ENCODE measurements at regions of chr5 and their contacts with region 1.

Region 1: DNA sequence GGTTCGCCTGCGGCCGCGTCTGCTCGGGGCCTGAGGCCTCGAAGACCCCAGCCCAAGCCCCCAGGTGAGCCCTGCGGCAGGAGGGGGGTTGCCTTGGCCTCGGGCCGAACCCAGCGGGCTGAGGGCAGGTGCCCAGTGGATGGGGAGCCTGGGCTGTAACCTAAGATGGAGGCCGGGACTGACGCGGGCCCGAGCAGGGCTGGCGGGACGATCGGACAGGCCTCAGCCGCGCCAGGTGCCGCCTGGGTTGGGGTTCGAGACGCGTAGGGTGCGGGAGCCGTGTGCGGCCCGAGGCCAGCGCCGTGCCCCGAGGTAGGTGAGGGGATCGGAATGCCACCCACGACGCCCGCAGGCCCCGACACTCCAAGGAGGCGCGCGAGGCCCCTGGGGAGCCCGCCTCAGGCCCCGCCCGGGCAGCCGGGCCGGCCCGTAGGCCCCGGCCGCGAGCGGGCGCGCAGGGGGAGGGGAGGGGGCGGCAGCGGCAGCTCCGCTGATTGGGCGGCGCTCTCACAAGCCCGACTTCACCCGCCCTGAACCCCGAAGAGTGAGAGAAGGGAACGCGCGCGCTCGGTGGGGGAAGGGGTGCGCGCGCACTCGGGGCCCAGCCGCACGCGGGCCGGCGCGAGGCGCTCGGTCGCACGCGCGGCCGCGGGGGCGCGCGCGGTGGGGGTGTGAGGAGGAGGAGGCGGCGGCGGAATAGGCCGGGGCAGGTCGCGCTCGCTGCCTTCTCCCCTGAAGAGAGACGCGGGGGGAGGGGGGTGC is at the start of gene NSD1:
- DNase-seq: peak; percentile 95
- total RNA-seq, gene NSD1: 53.9 TPM

Region 2: GRCh38 chr5:176415952-176416924 is 717.0 kb before region 1 on chr5 and contains the start of gene CLTB:
- intact Hi-C with region 1: no loop called
- DNase-seq: peak; percentile 97
- total RNA-seq, gene CLTB: 252 TPM

Region 3: DNA sequence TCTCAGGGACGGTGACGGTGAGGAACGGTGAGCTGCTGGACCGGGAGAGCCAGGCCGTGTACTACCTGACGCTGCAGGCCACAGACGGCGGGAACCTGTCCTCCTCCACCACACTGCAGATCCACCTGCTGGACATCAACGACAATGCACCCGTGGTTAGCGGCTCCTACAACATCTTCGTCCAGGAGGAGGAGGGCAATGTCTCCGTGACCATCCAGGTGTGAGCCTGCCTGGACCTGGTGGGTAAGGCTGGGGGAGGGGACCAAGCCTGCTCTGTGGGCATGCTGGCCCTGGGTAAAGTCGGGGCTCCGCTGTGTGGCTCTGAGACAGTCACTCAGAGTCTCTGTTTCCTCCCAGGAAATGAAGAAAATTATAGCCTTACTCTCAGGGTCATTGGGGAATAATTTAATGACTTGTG is 554.9 kb before region 1 on chr5:
- intact Hi-C with region 1: no loop called
- DNase-seq: no peak

Region 4: GRCh38 chr5:177195307-177195952 is 62.2 kb after region 1 on chr5:
- intact Hi-C with region 1: loop called (anchors 5 kb)
- DNase-seq: no peak

Region 5: GRCh38 chr5:177249761-177250526 is 116.7 kb after region 1 on chr5:
- intact Hi-C with region 1: loop called (anchors 5 kb)
- DNase-seq: no peak

Region 6: DNA sequence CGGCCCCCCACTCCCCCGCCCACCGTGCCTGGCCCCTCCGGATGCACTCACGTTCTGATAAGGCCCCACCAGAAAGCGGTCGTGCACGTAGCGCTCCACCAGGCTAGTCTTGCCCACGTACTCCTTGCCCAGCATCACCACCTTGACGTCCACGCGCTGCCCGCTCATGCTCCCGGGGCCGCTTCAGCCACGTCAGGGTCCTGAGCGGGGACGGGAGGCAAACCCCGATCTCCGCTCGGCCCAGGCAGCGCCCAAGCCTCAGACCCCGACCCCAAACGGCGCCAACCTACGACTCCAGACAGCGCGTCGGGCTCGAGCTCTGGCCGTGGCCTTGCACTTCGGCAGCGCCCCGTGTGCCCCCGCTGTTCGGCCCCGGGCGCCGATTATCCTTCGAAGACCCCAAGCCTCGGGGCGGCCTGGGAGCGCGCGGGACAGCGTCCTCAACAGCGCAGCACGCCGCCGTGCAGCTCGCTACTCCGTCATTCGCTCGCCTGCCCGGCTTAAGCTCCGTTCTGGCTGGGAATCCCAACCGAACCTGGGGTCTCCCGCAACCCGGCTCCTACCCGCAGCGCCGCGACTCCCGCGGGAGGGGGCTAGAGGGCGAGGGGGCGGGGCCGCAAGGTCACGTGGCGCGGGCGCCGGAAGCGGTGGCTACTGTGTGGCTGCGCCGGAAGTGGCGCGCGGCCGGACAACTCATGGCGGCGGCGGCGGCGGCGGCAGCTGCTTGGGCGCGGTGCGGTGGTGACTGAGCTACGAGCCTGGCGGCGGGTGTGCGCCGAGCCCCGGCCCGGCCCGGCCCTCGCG is 170.1 kb after region 1 on chr5 and contains the starts of genes PRELID1 and RAB24:
- intact Hi-C with region 1: loop called (anchors 5 kb)
- DNase-seq: peak; percentile 95
- total RNA-seq, gene PRELID1: 49.8 TPM
- total RNA-seq, gene RAB24: 19.0 TPM

Region 7: DNA sequence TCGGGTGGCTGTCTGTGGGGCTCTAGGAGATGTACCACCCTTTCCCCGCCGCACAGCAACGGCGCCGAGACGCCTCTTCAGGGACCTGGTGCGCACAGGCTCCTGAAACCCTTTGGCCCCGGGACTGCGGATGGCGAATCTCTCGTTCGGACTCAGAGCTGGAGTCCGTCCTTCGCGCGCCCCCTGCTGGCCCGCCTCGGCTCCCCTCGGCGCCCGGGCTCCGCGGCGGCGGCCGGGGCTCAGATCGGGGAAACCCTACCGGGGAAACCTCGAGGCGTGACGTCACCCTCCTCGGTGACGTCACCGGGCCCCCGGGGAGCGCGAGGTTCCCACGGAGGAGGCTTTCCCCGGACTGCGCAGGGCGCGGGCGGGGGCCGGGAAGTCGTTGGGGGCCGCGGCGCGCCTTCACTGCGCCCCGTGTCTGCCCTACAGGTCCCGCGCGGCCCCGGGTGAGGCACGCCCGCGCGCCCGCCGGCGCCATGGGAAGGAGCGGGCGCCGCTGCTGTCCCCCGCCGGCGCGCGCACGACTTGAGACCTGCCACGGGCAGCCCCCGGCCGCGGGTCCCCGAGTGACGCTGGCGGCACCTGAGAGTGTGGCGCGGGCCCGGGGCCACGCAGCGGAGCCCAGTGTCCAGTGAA is 321.2 kb after region 1 on chr5:
- intact Hi-C with region 1: no loop called
- DNase-seq: peak; percentile 95

Measured in cardiac septum (tissue), 1 donor.